Heart left ventricle (tissue), 16 donors: ENCODE measurements at regions of chr2 and their contacts with region 1.

Region 1: DNA sequence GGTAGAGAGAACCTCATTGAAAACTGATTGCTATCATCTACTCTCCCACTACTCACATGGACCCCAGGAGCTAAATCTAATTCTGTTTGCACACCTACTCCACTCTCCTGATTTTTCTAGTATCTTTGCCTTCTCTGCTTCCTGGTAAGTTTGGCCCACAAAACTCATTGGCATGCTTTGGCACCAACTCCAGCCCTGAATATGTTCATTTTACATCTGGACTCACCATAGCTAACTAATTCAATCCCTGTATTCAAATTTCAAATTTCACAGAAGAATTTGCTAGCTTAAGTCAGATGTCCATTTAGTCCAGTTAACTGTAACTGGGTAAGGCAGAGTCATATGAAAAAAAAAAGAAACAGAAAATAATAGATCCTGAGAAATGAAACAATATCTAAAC is 442.1 kb downstream of the SUCLG1 start:
- DNase-seq: no peak
- ATAC-seq: no peak
- H3K4me3 ChIP-seq: no peak overlapping the region
- H3K27ac ChIP-seq: no peak overlapping the region
- H3K4me1 ChIP-seq: no peaks in the 10 kb centered on the region
- H3K27me3 ChIP-seq: no peaks in the 10 kb centered on the region
- CTCF ChIP-seq: no peak
- POLR2A ChIP-seq: no peak

Region 2: GRCh38 chr2:83850071-83850725 is 166.8 kb before region 1 on chr2:
- intact Hi-C with region 1: no loop called
- DNase-seq: no peak
- ATAC-seq: no peak
- H3K4me3 ChIP-seq: no peak overlapping the region
- H3K27ac ChIP-seq: no peak overlapping the region
- H3K4me1 ChIP-seq: no peaks in the 10 kb centered on the region
- H3K27me3 ChIP-seq: no peaks in the 10 kb centered on the region
- CTCF ChIP-seq: no peak
- POLR2A ChIP-seq: no peak

Region 3: GRCh38 chr2:84297155-84297554 is 280.1 kb after region 1 on chr2:
- intact Hi-C with region 1: loop called (anchors 2 to 5 kb)
- DNase-seq: no peak
- ATAC-seq: no peak
- H3K4me3 ChIP-seq: no peak overlapping the region
- H3K27ac ChIP-seq: no peak overlapping the region
- H3K4me1 ChIP-seq: no peaks in the 10 kb centered on the region
- H3K27me3 ChIP-seq: peaks cover 0 to 5% (median 0%) of the 10 kb centered on the region in 9 donors
- CTCF ChIP-seq: no peak
- POLR2A ChIP-seq: no peak